B cell (primary cell): ENCODE measurements at regions of chr22 and their contacts with region 1.

Region 1: DNA sequence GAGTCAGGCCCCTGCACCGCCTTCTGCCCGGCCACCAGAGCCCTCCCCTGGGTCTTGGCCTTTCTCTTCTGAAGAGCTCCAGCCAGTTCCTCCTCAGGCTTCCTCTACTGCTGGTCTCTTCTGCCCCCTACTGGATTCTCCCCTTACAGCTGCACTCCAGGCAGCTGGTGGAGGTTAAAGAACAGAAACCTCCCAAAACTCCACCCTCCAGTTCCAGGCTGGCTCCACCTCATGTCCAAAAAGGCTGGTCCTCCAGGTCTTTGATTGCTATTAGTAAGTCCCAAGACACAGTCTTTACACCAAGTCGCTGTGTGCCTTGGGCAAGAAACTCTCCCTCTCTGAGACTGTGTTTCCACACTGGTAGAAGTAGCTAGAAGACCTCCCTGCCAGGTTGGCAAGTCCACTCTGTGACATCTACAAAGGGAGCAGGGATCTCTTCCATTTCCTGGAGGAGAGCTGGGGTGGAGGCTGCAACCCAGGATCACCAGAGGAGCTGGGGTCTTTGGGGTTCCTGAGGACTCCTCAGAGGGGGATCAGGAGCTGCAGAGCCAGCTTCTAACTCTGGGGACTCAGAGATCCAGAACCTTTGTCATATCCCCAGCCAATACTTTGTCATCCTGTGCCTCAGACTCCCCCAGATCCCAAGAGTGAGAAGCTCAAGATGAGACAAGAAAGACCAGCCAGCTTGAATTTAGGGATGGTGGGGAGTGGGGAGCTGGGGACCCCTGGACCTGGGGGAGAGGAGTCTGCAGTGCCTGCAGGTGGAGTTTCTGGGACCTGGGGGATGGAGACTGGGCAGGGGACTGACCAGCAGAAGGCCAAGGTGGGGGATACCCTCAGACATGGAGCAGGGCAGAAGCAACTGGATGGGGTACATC is 3.4 kb upstream of the IGLL5 start:
- DNase-seq: peak; percentile 86
- ATAC-seq: peak; percentile 59
- H3K4me3 ChIP-seq: peak overlapping the region in 2 of 5 experiments; percentile 11 to 44
- H3K4me3 Mint-ChIP-seq: peak overlapping the region; percentile 74
- H3K27ac ChIP-seq: peak overlapping the region; percentile 38 to 56
- H3K27ac Mint-ChIP-seq: peak overlapping the region; percentile 81
- H3K4me1 ChIP-seq: peaks cover 83 to 95% of the 10 kb centered on the region in 2 donors
- H3K4me1 Mint-ChIP-seq: peaks cover 94% of the 10 kb centered on the region
- H3K27me3 ChIP-seq: peaks cover 0 to 10% (median 3%) of the 10 kb centered on the region in 4 experiments
- H3K27me3 Mint-ChIP-seq: peaks cover 10% of the 10 kb centered on the region
- CTCF ChIP-seq: peak; percentile 77

Region 2: GRCh38 chr22:22687638-22688500 is 196.4 kb before region 1 on chr22:
- CTCF ChIA-PET with region 1: interaction called, 24 read pairs
- POLR2A ChIA-PET with region 1: interaction called, 4 read pairs
- intact Hi-C with region 1: no loop called
- DNase-seq: peak; percentile 36
- ATAC-seq: no peak
- H3K4me3 ChIP-seq: no peak overlapping the region
- H3K4me3 Mint-ChIP-seq: peak overlapping the region; percentile 78
- H3K27ac ChIP-seq: peak overlapping the region; percentile 11 to 52
- H3K27ac Mint-ChIP-seq: peak overlapping the region; percentile 81
- H3K4me1 ChIP-seq: peaks cover 46 to 56% of the 10 kb centered on the region in 2 donors
- H3K4me1 Mint-ChIP-seq: peaks cover 54% of the 10 kb centered on the region
- H3K27me3 ChIP-seq: no peaks in the 10 kb centered on the region
- H3K27me3 Mint-ChIP-seq: no peaks in the 10 kb centered on the region
- CTCF ChIP-seq: peak; percentile 47

Region 3: DNA sequence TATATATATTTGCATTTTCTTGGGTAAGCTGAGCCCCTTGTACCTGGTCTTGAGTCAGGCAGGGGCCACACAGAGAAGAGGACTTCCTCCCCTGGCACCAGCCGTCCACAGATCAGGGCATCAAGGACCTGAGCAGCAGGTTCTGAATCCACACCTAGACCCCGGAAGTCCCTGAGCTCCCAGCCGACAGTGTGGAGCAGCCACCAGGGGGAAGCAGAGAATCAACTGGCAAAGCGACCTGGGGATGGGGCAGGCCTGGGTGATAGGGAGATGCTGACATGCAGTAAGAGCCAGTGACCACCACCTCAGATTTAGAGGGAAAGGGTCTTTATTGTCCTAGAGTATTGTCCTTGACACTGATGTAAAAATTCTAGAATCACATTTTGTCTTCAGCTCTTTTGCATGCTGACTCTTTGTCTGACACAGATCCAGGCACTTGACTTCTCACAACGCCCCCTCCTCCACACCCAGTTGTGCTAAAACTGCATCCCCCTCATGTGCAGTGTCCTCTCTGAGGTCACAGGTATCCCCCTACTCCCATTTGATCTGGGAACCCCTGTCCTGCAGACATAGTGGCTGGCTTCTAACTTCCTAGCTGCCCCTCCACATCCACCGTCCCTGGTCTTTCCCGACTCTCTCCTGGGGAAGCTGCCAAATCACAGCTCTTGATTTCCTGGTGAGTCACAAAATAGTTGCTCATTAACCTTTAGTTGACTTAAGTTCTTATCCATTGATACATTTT is 130.6 kb before region 1 on chr22:
- CTCF ChIA-PET with region 1: interaction called, 55 read pairs
- POLR2A ChIA-PET with region 1: no interaction called
- intact Hi-C with region 1: loop called (anchors 1 kb)
- DNase-seq: peak; percentile 79
- ATAC-seq: peak; percentile 86
- H3K4me3 ChIP-seq: no peak overlapping the region
- H3K4me3 Mint-ChIP-seq: no peak overlapping the region
- H3K27ac ChIP-seq: peak overlapping the region in 1 of 2 donors; percentile 12
- H3K27ac Mint-ChIP-seq: peak overlapping the region; percentile 72
- H3K4me1 ChIP-seq: peaks cover 14 to 17% of the 10 kb centered on the region in 2 donors
- H3K4me1 Mint-ChIP-seq: peaks cover 27% of the 10 kb centered on the region
- H3K27me3 ChIP-seq: no peaks in the 10 kb centered on the region
- H3K27me3 Mint-ChIP-seq: no peaks in the 10 kb centered on the region
- CTCF ChIP-seq: peak; percentile 74

Region 4: DNA sequence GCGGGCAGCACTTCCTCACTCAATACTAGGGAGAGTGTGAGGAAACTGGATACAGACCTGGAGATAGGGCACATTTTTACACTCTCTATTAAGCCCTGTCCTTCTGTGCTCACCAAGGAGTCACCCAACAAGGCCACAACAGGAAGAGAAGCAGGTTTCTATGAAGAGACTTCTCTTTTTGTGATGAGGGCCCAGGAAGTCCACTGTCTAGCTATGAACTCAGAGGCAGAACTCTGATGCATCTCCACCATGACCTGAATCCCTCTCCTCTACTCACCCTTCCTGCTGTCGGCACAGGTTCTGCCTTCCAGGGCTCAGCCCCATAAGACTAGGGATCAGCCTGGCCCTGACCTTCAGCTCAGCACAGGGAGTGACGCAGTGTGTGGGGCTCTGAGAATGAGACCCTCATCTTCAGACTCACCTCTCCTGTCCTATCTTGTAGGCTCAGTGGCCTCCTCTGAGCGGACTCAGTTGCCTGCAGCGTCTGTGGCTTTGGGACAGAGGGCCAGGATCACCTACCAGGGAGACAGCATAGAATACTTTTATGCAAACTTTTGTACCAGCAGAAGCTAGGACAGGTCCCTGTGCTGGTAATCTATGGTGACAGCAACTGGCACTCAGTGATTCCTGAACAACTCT is 46.0 kb before region 1 on chr22:
- CTCF ChIA-PET with region 1: interaction called, 16 read pairs
- POLR2A ChIA-PET with region 1: no interaction called
- intact Hi-C with region 1: no loop called
- DNase-seq: peak; percentile 47
- ATAC-seq: peak; percentile 54
- H3K4me3 ChIP-seq: no peak overlapping the region
- H3K4me3 Mint-ChIP-seq: peak overlapping the region; percentile 29
- H3K27ac ChIP-seq: no peak overlapping the region
- H3K27ac Mint-ChIP-seq: peak overlapping the region; percentile 2
- H3K4me1 ChIP-seq: peaks cover 12 to 16% of the 10 kb centered on the region in 2 donors
- H3K4me1 Mint-ChIP-seq: peaks cover 18% of the 10 kb centered on the region
- H3K27me3 ChIP-seq: peaks cover 0 to 5% (median 0%) of the 10 kb centered on the region in 4 experiments
- H3K27me3 Mint-ChIP-seq: peaks cover 27% of the 10 kb centered on the region
- CTCF ChIP-seq: no peak

Region 5: GRCh38 chr22:22870577-22871404 is 13.5 kb before region 1 on chr22:
- CTCF ChIA-PET with region 1: interaction called, 24 read pairs
- POLR2A ChIA-PET with region 1: interaction called, 4 read pairs
- intact Hi-C with region 1: loop called (anchors 2 kb)
- DNase-seq: peak; percentile 54
- ATAC-seq: peak; percentile 56
- H3K4me3 ChIP-seq: no peak overlapping the region
- H3K4me3 Mint-ChIP-seq: no peak overlapping the region
- H3K27ac ChIP-seq: no peak overlapping the region
- H3K27ac Mint-ChIP-seq: no peak overlapping the region
- H3K4me1 ChIP-seq: peaks cover 33 to 40% of the 10 kb centered on the region in 2 donors
- H3K4me1 Mint-ChIP-seq: peaks cover 39% of the 10 kb centered on the region
- H3K27me3 ChIP-seq: peaks cover 0 to 6% (median 3%) of the 10 kb centered on the region in 4 experiments
- H3K27me3 Mint-ChIP-seq: peaks cover 3% of the 10 kb centered on the region
- CTCF ChIP-seq: peak; percentile 44

Region 6: GRCh38 chr22:22928666-22929380 is 44.6 kb after region 1 on chr22:
- CTCF ChIA-PET with region 1: interaction called, 181 read pairs
- POLR2A ChIA-PET with region 1: interaction called, 4 read pairs
- intact Hi-C with region 1: loop called (anchors 1 kb)
- DNase-seq: peak; percentile 97
- ATAC-seq: peak; percentile 90
- H3K4me3 ChIP-seq: peak overlapping the region in 2 of 5 experiments; percentile 3 to 44
- H3K4me3 Mint-ChIP-seq: peak overlapping the region; percentile 79
- H3K27ac ChIP-seq: peak overlapping the region; percentile 94 to 99
- H3K27ac Mint-ChIP-seq: peak overlapping the region; percentile 95
- H3K4me1 ChIP-seq: peaks cover 98 to 100% of the 10 kb centered on the region in 2 donors
- H3K4me1 Mint-ChIP-seq: peaks cover 98% of the 10 kb centered on the region
- H3K27me3 ChIP-seq: no peaks in the 10 kb centered on the region
- H3K27me3 Mint-ChIP-seq: no peaks in the 10 kb centered on the region
- CTCF ChIP-seq: no peak